CD14-positive monocyte (primary cell): ENCODE measurements at regions of chr19 and their contacts with region 1.

Region 1: GRCh38 chr19:56314562-56315077 is at the start of gene ZSCAN5A:
- DNase-seq: peak; percentile 91 to 97 (median 95)
- H3K4me3 ChIP-seq: peak within 1 kb of the TSS; percentile 72 to 93 (median 88)
- H3K4me3 Mint-ChIP-seq: peak within 1 kb of the TSS; percentile 94 to 97
- H3K27ac ChIP-seq: peak within 1 kb of the TSS; percentile 84 to 96
- H3K27ac Mint-ChIP-seq: peak within 1 kb of the TSS; percentile 96 to 99 (median 99)
- H3K4me1 ChIP-seq: peaks cover 47 to 59% of the 10 kb centered on the region in 2 donors
- H3K4me1 Mint-ChIP-seq: peaks cover 51% of the 10 kb centered on the region
- H3K27me3 ChIP-seq: no peaks in the 10 kb centered on the region
- H3K27me3 Mint-ChIP-seq: peaks cover 0 to 1% (median 0%) of the 10 kb centered on the region in 3 donors
- CTCF ChIP-seq: no peak
- polyA plus RNA-seq, gene ZSCAN5A: 5.3 to 11.3 (median 6.3) TPM

Region 2: GRCh38 chr19:56121180-56122167 is 193.1 kb before region 1 on chr19 and contains the start of gene ZNF787:
- intact Hi-C with region 1: loop called in 1 of 2 experiments (anchors 2 kb)
- DNase-seq: peak; percentile 95 to 97 (median 95)
- H3K4me3 ChIP-seq: peak within 1 kb of the TSS; percentile 60 to 80 (median 64)
- H3K4me3 Mint-ChIP-seq: peak within 1 kb of the TSS; percentile 84 to 92
- H3K27ac ChIP-seq: peak within 1 kb of the TSS; percentile 95 to 96
- H3K27ac Mint-ChIP-seq: peak within 1 kb of the TSS; percentile 94 to 98 (median 97)
- H3K4me1 ChIP-seq: peaks cover 31 to 45% of the 10 kb centered on the region in 2 donors
- H3K4me1 Mint-ChIP-seq: peaks cover 38% of the 10 kb centered on the region
- H3K27me3 ChIP-seq: no peaks in the 10 kb centered on the region
- H3K27me3 Mint-ChIP-seq: peaks cover 0 to 2% (median 0%) of the 10 kb centered on the region in 3 donors
- CTCF ChIP-seq: no peak
- polyA plus RNA-seq, gene ZNF787: 1.2 to 16.2 (median 1.8) TPM

Region 3: GRCh38 chr19:56252699-56253422 is 61.8 kb before region 1 on chr19:
- intact Hi-C with region 1: loop called in 1 of 2 experiments (anchors 10 kb)
- DNase-seq: peak; percentile 69 to 75 (median 72)
- H3K4me3 ChIP-seq: no peak overlapping the region
- H3K4me3 Mint-ChIP-seq: peak overlapping the region in 1 of 2 donors; percentile 48
- H3K27ac ChIP-seq: no peak overlapping the region
- H3K27ac Mint-ChIP-seq: peak overlapping the region in 1 of 7 donors; percentile 70
- H3K4me1 ChIP-seq: no peaks in the 10 kb centered on the region
- H3K4me1 Mint-ChIP-seq: peaks cover 3% of the 10 kb centered on the region
- H3K27me3 ChIP-seq: no peaks in the 10 kb centered on the region
- H3K27me3 Mint-ChIP-seq: no peaks in the 10 kb centered on the region
- CTCF ChIP-seq: peak; percentile 86

Region 4: GRCh38 chr19:56273563-56274117 is 41.0 kb before region 1 on chr19:
- intact Hi-C with region 1: loop called (anchors 5 kb)
- DNase-seq: no peak
- H3K4me3 ChIP-seq: no peak overlapping the region
- H3K4me3 Mint-ChIP-seq: no peak overlapping the region
- H3K27ac ChIP-seq: no peak overlapping the region
- H3K27ac Mint-ChIP-seq: peak overlapping the region in 1 of 7 donors; percentile 0
- H3K4me1 ChIP-seq: peaks cover 21 to 28% of the 10 kb centered on the region in 2 donors
- H3K4me1 Mint-ChIP-seq: peaks cover 40% of the 10 kb centered on the region
- H3K27me3 ChIP-seq: no peaks in the 10 kb centered on the region
- H3K27me3 Mint-ChIP-seq: peaks cover 0 to 2% (median 0%) of the 10 kb centered on the region in 3 donors
- CTCF ChIP-seq: no peak

Region 5: DNA sequence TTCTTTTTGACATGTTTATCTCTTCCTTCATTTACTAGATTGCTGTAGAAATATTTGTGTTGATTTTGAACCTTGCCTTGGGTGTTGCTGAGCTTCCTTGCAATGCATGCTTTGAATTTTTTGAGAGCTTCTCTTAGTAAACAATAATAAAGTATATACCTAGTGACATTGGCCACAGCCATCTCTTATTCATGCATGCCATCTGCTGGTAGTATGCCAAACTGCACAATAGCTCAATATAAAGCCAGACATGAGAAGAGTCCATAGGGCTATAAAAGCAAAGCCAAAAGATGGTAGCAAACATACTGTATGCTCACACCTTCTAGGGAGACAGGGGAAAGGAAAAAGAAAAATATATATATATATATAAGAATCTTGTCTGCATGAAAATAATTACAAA is 18.9 kb after region 1 on chr19:
- intact Hi-C with region 1: loop called in 1 of 2 experiments (anchors 1 kb)
- DNase-seq: peak; percentile 65 to 76 (median 67)
- H3K4me3 ChIP-seq: no peak overlapping the region
- H3K4me3 Mint-ChIP-seq: no peak overlapping the region
- H3K27ac ChIP-seq: no peak overlapping the region
- H3K27ac Mint-ChIP-seq: no peak overlapping the region
- H3K4me1 ChIP-seq: no peaks in the 10 kb centered on the region
- H3K4me1 Mint-ChIP-seq: peaks cover 2% of the 10 kb centered on the region
- H3K27me3 ChIP-seq: no peaks in the 10 kb centered on the region
- H3K27me3 Mint-ChIP-seq: peaks cover 0 to 4% (median 0%) of the 10 kb centered on the region in 3 donors
- CTCF ChIP-seq: peak; percentile 93